WTC11 (cell line): ENCODE measurements at regions of chr7 and their contacts with region 1.

Region 1: DNA sequence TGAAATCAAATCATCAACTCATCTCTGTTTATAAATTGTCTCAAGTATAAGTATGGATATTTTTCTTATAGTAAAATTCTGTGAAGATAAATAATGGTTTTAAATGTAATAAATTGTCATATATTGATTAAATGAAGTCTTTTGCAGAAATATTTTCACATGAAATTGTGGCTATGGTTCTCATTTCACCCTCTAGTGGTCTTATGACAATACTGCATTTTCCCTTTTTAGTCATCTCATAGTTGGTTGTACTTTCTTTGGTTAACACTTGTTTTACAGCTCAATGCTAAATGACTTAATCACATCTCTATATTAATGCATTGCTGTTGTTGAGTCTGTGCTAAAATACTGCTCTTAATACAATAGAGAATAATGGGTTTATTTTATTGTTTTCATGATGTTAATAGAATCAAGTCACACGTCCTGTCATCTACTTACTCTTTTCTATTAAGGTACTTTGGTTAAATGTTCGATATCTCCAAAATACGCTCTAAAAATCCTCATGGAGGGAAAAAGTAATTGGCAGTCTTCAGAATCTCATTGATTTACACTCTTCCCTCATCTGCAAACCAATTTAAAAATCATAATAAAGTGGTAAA is 38.0 kb upstream of the CACNA2D1 start:
- DNase-seq: no peak
- ATAC-seq: no peak
- H3K4me3 Mint-ChIP-seq: no peak overlapping the region
- H3K27ac Mint-ChIP-seq: no peak overlapping the region
- H3K4me1 Mint-ChIP-seq: no peaks in the 10 kb centered on the region
- H3K27me3 Mint-ChIP-seq: no peaks in the 10 kb centered on the region
- CTCF ChIP-seq: peak; percentile 72

Region 2: GRCh38 chr7:82506702-82507101 is 25.1 kb after region 1 on chr7:
- CTCF ChIA-PET with region 1: interaction called, 11 read pairs
- POLR2A ChIA-PET with region 1: no interaction called
- DNase-seq: no peak
- ATAC-seq: no peak; the same call in 1 of the 2 replicates
- H3K4me3 Mint-ChIP-seq: no peak overlapping the region
- H3K27ac Mint-ChIP-seq: peak overlapping the region; percentile 87; the same call in 1 of the 2 replicates
- H3K4me1 Mint-ChIP-seq: peaks cover 25% of the 10 kb centered on the region
- H3K27me3 Mint-ChIP-seq: no peaks in the 10 kb centered on the region; the same call in none of the 2 replicates
- CTCF ChIP-seq: no peak